ENCODE measurements at regions of chr1 and their contacts with region 1.

Region 1: GRCh38 chr1:40153073-40153770 is 8.0 kb upstream of the RLF start:
- DNase-seq: peak; percentile 77
- ATAC-seq: peak; percentile 85
- H3K4me3 ChIP-seq: no peak overlapping the region
- H3K27ac ChIP-seq: no peak overlapping the region
- H3K4me1 ChIP-seq: no peaks in the 10 kb centered on the region
- H3K27me3 ChIP-seq: peaks cover 14% of the 10 kb centered on the region
- CTCF ChIP-seq: peak; percentile 81
- POLR2A ChIP-seq: no peak
- RAD21 ChIP-seq: peak; percentile 74

Region 2: DNA sequence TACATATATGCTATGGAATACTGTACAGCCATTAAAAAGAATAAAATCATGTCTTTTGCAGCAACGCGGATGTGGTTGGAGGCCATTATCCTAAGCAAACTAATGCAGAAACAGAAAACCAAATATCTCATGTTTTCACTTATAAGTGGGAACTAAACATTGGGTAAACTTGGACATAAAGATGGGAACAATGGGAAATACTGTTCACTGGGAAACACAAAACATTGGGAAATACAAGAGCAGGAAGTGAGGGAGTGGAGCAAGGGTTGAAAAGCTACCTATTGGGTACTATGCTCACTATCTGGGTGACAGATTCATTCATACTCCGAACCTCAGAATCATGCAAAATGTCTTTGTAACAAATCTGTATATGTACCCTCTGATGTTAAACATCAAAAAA is 38.8 kb before region 1 on chr1:
- CTCF ChIA-PET with region 1: no interaction called
- POLR2A ChIA-PET with region 1: no interaction called
- dilution Hi-C with region 1: no loop called
- in situ Hi-C with region 1: no loop called
- intact Hi-C with region 1: no loop called
- DNase-seq: no peak
- ATAC-seq: no peak
- H3K4me3 ChIP-seq: no peak overlapping the region
- H3K27ac ChIP-seq: no peak overlapping the region
- H3K4me1 ChIP-seq: no peaks in the 10 kb centered on the region
- H3K27me3 ChIP-seq: peaks cover 19% of the 10 kb centered on the region
- CTCF ChIP-seq: no peak
- POLR2A ChIP-seq: no peak
- RAD21 ChIP-seq: no peak

Region 3: DNA sequence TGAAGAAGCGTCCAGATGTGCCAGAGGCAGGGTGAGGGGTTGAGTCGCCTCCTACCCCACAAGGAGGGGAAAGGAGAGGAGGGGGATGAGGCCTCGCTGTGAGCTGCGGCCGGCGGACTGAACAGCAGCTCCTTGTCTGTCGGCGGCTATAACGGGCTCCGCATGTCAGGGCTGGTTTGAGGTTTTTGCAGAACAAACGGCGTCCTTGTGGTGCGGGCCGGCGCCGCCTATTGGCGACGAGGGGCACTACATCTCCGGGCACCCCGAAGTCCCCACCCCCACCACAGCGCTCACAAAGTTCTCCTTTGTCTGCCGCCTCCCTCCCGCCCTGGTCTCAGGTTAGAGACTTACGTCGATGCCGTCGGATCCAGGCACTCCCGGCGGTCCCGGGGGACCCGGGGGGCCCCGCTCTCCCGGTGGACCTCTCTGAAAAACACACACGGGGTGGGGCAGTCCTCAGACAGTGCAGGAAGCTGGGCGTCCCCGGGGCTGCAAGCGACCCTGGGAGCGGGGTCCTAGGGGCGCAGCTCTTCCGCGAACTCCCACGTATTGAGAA is 162.1 kb after region 1 on chr1:
- CTCF ChIA-PET with region 1: interaction called, 16 read pairs
- POLR2A ChIA-PET with region 1: no interaction called
- dilution Hi-C with region 1: no loop called
- in situ Hi-C with region 1: no loop called
- intact Hi-C with region 1: no loop called
- DNase-seq: peak; percentile 83
- ATAC-seq: peak; percentile 97
- H3K4me3 ChIP-seq: peak overlapping the region; percentile 28; the same call in 1 of the 2 replicates
- H3K27ac ChIP-seq: peak overlapping the region; percentile 79
- H3K4me1 ChIP-seq: peaks cover 13% of the 10 kb centered on the region; the same call in 1 of the 2 replicates
- H3K27me3 ChIP-seq: peaks cover 37% of the 10 kb centered on the region
- CTCF ChIP-seq: peak; percentile 88
- POLR2A ChIP-seq: no peak
- RAD21 ChIP-seq: peak; percentile 71

Region 4: DNA sequence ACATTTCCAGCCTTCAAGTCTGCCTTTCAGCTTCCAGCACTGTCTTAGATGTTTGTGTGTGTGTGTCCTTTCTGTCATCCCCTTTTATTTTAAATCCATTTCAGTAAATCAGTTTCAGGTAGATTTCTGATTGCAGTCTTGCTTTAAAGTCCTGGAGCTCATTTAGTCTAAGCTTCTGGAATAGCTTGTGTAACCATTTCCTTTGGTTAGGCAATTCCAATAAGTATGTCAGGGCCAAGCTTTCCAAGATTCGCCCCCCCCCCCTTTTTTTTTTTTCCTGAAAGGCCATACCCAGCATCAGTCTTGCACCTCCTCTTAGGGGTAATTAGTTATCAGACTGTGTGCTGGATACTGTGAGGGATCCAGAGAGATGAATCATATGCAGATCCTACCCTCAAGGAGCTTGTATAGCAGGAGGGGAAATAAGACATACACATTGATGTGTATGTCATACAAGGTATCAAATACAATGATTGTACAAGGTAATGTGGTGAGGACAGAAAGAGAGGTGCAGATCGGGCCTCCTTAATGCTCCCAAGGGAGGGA is 579.6 kb after region 1 on chr1:
- CTCF ChIA-PET with region 1: no interaction called
- POLR2A ChIA-PET with region 1: no interaction called
- dilution Hi-C with region 1: no loop called
- in situ Hi-C with region 1: no loop called
- intact Hi-C with region 1: no loop called
- DNase-seq: no peak
- ATAC-seq: no peak
- H3K4me3 ChIP-seq: no peak overlapping the region
- H3K27ac ChIP-seq: no peak overlapping the region
- H3K4me1 ChIP-seq: no peaks in the 10 kb centered on the region; the same call in 1 of the 2 replicates
- H3K27me3 ChIP-seq: no peaks in the 10 kb centered on the region
- CTCF ChIP-seq: no peak
- POLR2A ChIP-seq: no peak
- RAD21 ChIP-seq: no peak